HepG2 (cell line): ENCODE measurements at regions of chr6 and their contacts with region 1.

Region 1: DNA sequence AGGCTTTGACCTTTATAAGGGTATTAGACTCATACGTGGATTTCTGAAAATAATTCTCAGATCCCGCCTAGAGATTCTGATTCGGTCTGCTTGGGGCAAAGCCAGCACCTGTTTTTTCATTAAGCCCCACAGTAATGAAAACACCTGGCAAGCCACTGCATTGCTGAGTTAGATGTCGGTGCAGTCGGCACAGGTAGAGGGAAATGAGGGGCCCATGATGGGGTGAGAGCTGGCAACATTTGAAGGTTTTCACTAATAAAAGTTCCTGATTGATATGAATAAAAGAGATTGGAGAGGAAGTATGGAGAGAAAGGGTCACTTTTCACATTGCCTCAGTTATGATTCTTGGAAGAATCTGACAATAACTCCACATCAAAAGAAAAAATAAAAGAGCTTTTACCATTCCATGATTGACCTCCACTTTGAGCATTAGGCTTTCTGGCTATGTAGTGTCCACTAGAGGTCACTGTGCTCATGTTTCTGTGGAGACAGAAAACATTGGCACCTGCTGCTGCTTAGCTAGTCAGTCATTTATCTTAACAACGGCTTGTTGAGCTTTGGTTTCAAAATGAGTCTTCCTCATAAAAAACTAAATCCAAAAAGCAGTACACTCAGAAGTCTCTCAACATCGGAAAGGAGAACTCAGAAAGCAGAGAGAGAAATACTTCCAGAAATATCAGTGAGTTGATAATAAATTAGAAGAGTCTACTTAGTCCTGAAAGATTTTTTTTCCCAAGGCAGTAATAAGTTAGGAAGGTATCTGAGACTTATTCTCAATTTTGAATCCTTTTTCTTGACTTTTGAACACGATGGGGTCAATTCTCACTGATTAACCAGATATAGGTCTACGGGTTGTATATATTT is 53.3 kb upstream of the KLHL31 start:
- DNase-seq: peak; percentile 72
- ATAC-seq: peak; percentile 89
- H3K4me3 ChIP-seq: no peak overlapping the region
- H3K27ac ChIP-seq: no peak overlapping the region
- H3K4me1 ChIP-seq: peaks cover 22% of the 10 kb centered on the region
- H3K27me3 ChIP-seq: no peaks in the 10 kb centered on the region; a peak in 1 of 5 replicates
- CTCF ChIP-seq: peak; percentile 88
- EP300 ChIP-seq: no peak
- POLR2A ChIP-seq: no peak
- RAD21 ChIP-seq: no peak

Region 2: GRCh38 chr6:53513519-53513966 is 205.3 kb before region 1 on chr6:
- CTCF ChIA-PET with region 1: interaction called, 3 read pairs
- POLR2A ChIA-PET with region 1: no interaction called
- in situ Hi-C with region 1: no loop called
- intact Hi-C with region 1: loop called (anchors 5 kb)
- DNase-seq: peak; percentile 19
- ATAC-seq: peak; percentile 59
- H3K4me3 ChIP-seq: no peak overlapping the region
- H3K27ac ChIP-seq: peak overlapping the region; percentile 39
- H3K4me1 ChIP-seq: peaks cover 59% of the 10 kb centered on the region
- H3K27me3 ChIP-seq: no peaks in the 10 kb centered on the region
- CTCF ChIP-seq: peak; percentile 41; the same call in 1 of the 2 replicates
- EP300 ChIP-seq: 0 out of 4 replicates have a peak, but pooled peaks of 1 of the 2 experiments have one; percentile 8
- POLR2A ChIP-seq: no peak
- RAD21 ChIP-seq: no peak

Region 3: GRCh38 chr6:53679446-53679933 is 39.3 kb before region 1 on chr6:
- CTCF ChIA-PET with region 1: interaction called, 6 read pairs
- POLR2A ChIA-PET with region 1: no interaction called
- in situ Hi-C with region 1: no loop called
- intact Hi-C with region 1: loop called (anchors 5 kb)
- DNase-seq: peak; percentile 62
- ATAC-seq: peak; percentile 89
- H3K4me3 ChIP-seq: no peak overlapping the region
- H3K27ac ChIP-seq: no peak overlapping the region
- H3K4me1 ChIP-seq: no peaks in the 10 kb centered on the region
- H3K27me3 ChIP-seq: 0 out of 5 replicates have a peak, but pooled peaks cover 0 to 4% of the 10 kb centered on the region in 2 experiments
- CTCF ChIP-seq: peak; percentile 47
- EP300 ChIP-seq: no peak
- POLR2A ChIP-seq: no peak
- RAD21 ChIP-seq: peak; percentile 54; the same call in 1 of the 2 replicates

Region 4: DNA sequence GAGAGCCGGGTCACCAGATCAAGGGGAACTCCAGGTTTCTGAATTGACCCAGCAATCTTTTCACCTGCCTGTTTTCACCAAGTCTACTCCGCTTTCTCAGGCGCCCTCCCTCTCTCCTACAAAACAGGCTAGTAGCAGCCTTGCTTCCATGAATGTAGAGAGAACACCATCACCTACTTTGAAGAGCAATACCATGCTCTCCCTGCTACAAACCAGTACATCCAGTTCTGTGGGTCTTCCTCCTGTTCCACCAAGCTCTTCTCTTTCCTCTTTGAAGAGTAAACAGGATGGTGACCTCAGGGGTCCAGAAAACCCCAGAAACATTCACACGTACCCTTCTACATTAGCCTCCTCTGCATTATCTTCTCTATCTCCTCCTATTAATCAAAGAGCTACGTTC is 418.7 kb after region 1 on chr6:
- CTCF ChIA-PET with region 1: no interaction called
- POLR2A ChIA-PET with region 1: no interaction called
- in situ Hi-C with region 1: no loop called
- intact Hi-C with region 1: no loop called
- DNase-seq: no peak
- ATAC-seq: no peak
- H3K4me3 ChIP-seq: no peak overlapping the region
- H3K27ac ChIP-seq: no peak overlapping the region
- H3K4me1 ChIP-seq: peaks cover 24% of the 10 kb centered on the region
- H3K27me3 ChIP-seq: no peaks in the 10 kb centered on the region
- CTCF ChIP-seq: no peak
- EP300 ChIP-seq: no peak
- POLR2A ChIP-seq: no peak
- RAD21 ChIP-seq: no peak